Right ventricle myocardium superior (tissue), 1 donor: ENCODE measurements at regions of chr12 and their contacts with region 1.

Region 1: GRCh38 chr12:9118158-9118557 is 2.4 kb upstream of the A2M start:
- DNase-seq: peak; percentile 38
- ATAC-seq: peak; percentile 39

Region 2: GRCh38 chr12:8796831-8797626 is 321.1 kb before region 1 on chr12:
- intact Hi-C with region 1: no loop called
- DNase-seq: no peak
- ATAC-seq: no peak

Region 3: GRCh38 chr12:9027161-9028059 is 90.7 kb before region 1 on chr12:
- intact Hi-C with region 1: no loop called
- DNase-seq: no peak
- ATAC-seq: no peak

Region 4: GRCh38 chr12:9156119-9156518 is 38.0 kb after region 1 on chr12:
- intact Hi-C with region 1: no loop called
- DNase-seq: no peak
- ATAC-seq: no peak

Region 5: GRCh38 chr12:9244894-9245293 is 126.7 kb after region 1 on chr12:
- intact Hi-C with region 1: loop called (anchors 5 kb)
- DNase-seq: no peak
- ATAC-seq: no peak